ENCODE measurements at regions of chr14 and their contacts with region 1.

Region 1: DNA sequence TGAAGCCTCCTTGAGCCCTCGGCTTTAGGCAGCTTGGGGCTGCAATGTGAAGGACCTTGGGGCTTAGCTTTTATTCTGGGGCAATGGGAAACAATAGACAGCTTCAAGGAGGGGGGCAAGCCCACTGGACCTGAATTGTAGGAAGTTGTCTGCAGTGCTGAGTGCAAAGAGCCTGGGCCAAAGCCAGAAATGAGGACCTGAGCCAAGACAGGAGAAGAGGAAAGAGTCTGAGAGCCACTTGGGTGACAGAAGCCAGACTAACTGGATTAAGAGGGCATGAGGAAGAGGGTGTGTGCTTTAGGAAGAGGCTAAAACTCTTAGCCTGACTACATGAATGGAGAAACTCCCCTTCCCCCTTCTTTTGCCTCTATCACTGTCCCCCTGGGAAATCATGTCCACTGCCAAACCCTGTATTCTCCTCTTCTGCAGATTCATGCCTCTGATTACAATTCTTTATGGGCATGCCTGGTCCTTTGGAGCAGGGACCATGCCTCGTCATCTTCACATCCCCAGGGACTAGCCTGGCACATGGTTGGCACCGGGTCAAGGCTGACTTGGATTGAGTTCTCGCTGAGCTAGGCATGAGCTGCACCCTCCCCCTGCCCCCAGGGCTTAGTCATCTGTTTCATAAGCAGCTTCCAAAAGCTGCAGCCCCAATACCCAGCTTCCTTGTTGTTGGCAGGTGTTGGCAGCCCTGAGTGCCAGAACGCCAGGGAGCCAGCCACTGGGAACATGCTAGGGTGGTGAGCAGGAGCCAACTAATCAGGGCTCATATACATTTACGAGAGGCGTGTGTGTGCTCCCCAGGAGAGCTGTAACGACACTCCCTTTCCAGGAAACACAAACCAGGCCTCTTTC is 27.8 kb upstream of the JDP2 start:
- DNase-seq: peak; percentile 93 to 99
- H3K4me3 ChIP-seq: peak overlapping the region in 1 of 2 donors; percentile 27
- H3K27ac ChIP-seq: peak overlapping the region; percentile 43 to 66
- H3K4me1 ChIP-seq: peaks cover 9 to 17% of the 10 kb centered on the region in 2 donors
- H3K27me3 ChIP-seq: no peaks in the 10 kb centered on the region
- CTCF ChIP-seq: no peak

Region 2: GRCh38 chr14:75158843-75159614 is 241.0 kb before region 1 on chr14:
- intact Hi-C with region 1: no loop called
- DNase-seq: no peak
- H3K4me3 ChIP-seq: no peak overlapping the region
- H3K27ac ChIP-seq: no peak overlapping the region
- H3K4me1 ChIP-seq: peaks cover 0 to 3% of the 10 kb centered on the region in 2 donors
- H3K27me3 ChIP-seq: no peaks in the 10 kb centered on the region
- CTCF ChIP-seq: no peak

Region 3: GRCh38 chr14:75361751-75362433 is 38.2 kb before region 1 on chr14:
- intact Hi-C with region 1: loop called (anchors 2 kb)
- DNase-seq: peak in 1 of 2 donors; percentile 73
- H3K4me3 ChIP-seq: peak overlapping the region in 1 of 2 donors; percentile 35
- H3K27ac ChIP-seq: peak overlapping the region; percentile 68 to 74
- H3K4me1 ChIP-seq: peaks cover 3 to 24% of the 10 kb centered on the region in 2 donors
- H3K27me3 ChIP-seq: no peaks in the 10 kb centered on the region
- CTCF ChIP-seq: no peak